CD4-positive, alpha-beta memory T cell (primary cell): ENCODE measurements at regions of chr9 and their contacts with region 1.

Region 1: DNA sequence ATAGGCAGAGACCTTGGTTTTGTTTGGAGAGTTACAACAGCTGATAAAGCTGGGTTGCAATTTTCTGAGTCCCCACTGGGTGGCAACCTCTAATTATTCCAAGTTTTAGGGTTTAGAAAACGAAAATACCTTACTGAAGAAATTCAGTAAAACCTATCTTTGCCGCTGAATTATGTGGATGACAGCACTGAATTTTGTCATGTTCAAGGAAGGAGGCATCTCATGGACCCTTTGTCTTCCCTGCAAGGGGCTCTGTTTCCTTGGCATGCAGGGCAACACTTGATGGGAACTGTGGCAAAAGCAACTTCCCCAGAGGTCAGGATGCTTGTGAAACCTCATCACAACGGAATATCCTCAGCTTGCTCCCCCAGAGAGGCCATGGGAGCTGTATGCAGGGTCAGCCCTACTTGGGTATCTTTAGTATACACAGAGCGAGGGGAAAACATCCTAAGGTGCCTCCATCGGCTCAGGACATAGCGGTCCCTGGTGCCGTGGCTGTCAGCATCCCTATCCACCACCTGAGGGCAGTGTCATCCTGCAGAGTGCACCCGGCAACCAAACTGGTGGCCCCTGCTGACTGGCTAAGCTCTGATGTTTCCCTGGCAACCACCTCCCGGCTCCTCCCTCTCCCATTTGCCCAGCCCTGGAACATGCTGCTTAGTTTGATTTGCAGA is 123.1 kb downstream of the RXRA start:
- DNase-seq: peak; percentile 81 to 91 (median 86)
- H3K4me3 ChIP-seq: no peak overlapping the region
- H3K4me3 Mint-ChIP-seq: peak overlapping the region in 1 of 8 donors; percentile 65
- H3K27ac ChIP-seq: no peak overlapping the region
- H3K27ac Mint-ChIP-seq: peak overlapping the region in 6 of 7 donors; percentile 31 to 79 (median 64)
- H3K4me1 ChIP-seq: no peaks in the 10 kb centered on the region
- H3K4me1 Mint-ChIP-seq: peaks cover 2 to 12% (median 5%) of the 10 kb centered on the region in 4 donors
- H3K27me3 ChIP-seq: no peaks in the 10 kb centered on the region
- H3K27me3 Mint-ChIP-seq: no peaks in the 10 kb centered on the region

Region 2: GRCh38 chr9:134738869-134739659 is 289.7 kb after region 1 on chr9:
- CTCF ChIA-PET with region 1: interaction called, 18 read pairs
- POLR2A ChIA-PET with region 1: no interaction called
- intact Hi-C with region 1: no loop called
- DNase-seq: peak in 2 of 5 donors; percentile 15 to 25
- H3K4me3 ChIP-seq: no peak overlapping the region
- H3K4me3 Mint-ChIP-seq: no peak overlapping the region
- H3K27ac ChIP-seq: no peak overlapping the region
- H3K27ac Mint-ChIP-seq: no peak overlapping the region
- H3K4me1 ChIP-seq: no peaks in the 10 kb centered on the region
- H3K4me1 Mint-ChIP-seq: no peaks in the 10 kb centered on the region
- H3K27me3 ChIP-seq: no peaks in the 10 kb centered on the region
- H3K27me3 Mint-ChIP-seq: peaks cover 4 to 5% of the 10 kb centered on the region in 2 donors

Region 3: GRCh38 chr9:135410831-135411473 is 961.6 kb after region 1 on chr9:
- CTCF ChIA-PET with region 1: interaction called, 10 read pairs
- POLR2A ChIA-PET with region 1: interaction called, 4 read pairs
- intact Hi-C with region 1: no loop called
- DNase-seq: no peak
- H3K4me3 ChIP-seq: no peak overlapping the region
- H3K4me3 Mint-ChIP-seq: no peak overlapping the region
- H3K27ac ChIP-seq: no peak overlapping the region
- H3K27ac Mint-ChIP-seq: no peak overlapping the region
- H3K4me1 ChIP-seq: no peaks in the 10 kb centered on the region
- H3K4me1 Mint-ChIP-seq: no peaks in the 10 kb centered on the region
- H3K27me3 ChIP-seq: no peaks in the 10 kb centered on the region
- H3K27me3 Mint-ChIP-seq: peaks cover 2 to 10% of the 10 kb centered on the region in 2 donors